Mammary epithelial cell (primary cell): ENCODE measurements at regions of chr7 and their contacts with region 1.

Region 1: GRCh38 chr7:102396027-102397019 is at the start of gene PRKRIP1:
- DNase-seq: peak; percentile 89
- H3K4me3 ChIP-seq: peak within 1 kb of the TSS; percentile 76 to 97 (median 94)
- H3K27ac ChIP-seq: peak within 1 kb of the TSS; percentile 88
- H3K4me1 ChIP-seq: peaks cover 6% of the 10 kb centered on the region
- H3K27me3 ChIP-seq: no peaks in the 10 kb centered on the region
- CTCF ChIP-seq: no peak
- total RNA-seq, gene PRKRIP1: 13.3 to 27.1 TPM

Region 2: GRCh38 chr7:100827330-100828227 is 1568.7 kb before region 1 on chr7 and contains the start of gene EPHB4:
- CTCF ChIA-PET with region 1: no interaction called
- dilution Hi-C with region 1: no loop called
- in situ Hi-C with region 1: no loop called
- intact Hi-C with region 1: no loop called
- DNase-seq: peak; percentile 79
- H3K4me3 ChIP-seq: peak within 1 kb of the TSS; percentile 70 to 86 (median 72)
- H3K27ac ChIP-seq: peak within 1 kb of the TSS; percentile 39
- H3K4me1 ChIP-seq: peaks cover 7% of the 10 kb centered on the region
- H3K27me3 ChIP-seq: no peaks in the 10 kb centered on the region
- CTCF ChIP-seq: no peak
- total RNA-seq, gene EPHB4: 75.0 to 81.0 TPM

Region 3: GRCh38 chr7:102286237-102287110 is 109.8 kb before region 1 on chr7 and contains the start of gene SH2B2:
- CTCF ChIA-PET with region 1: no interaction called
- dilution Hi-C with region 1: loop called (anchors 5 kb)
- in situ Hi-C with region 1: loop called (anchors 5 kb)
- intact Hi-C with region 1: no loop called
- DNase-seq: peak; percentile 32
- H3K4me3 ChIP-seq: peak within 1 kb of the TSS; percentile 72 to 83 (median 80)
- H3K27ac ChIP-seq: no peak within 1 kb of the TSS
- H3K4me1 ChIP-seq: peaks cover 12% of the 10 kb centered on the region
- H3K27me3 ChIP-seq: no peaks in the 10 kb centered on the region
- CTCF ChIP-seq: no peak
- total RNA-seq, gene SH2B2: 3.0 to 3.4 TPM

Region 4: DNA sequence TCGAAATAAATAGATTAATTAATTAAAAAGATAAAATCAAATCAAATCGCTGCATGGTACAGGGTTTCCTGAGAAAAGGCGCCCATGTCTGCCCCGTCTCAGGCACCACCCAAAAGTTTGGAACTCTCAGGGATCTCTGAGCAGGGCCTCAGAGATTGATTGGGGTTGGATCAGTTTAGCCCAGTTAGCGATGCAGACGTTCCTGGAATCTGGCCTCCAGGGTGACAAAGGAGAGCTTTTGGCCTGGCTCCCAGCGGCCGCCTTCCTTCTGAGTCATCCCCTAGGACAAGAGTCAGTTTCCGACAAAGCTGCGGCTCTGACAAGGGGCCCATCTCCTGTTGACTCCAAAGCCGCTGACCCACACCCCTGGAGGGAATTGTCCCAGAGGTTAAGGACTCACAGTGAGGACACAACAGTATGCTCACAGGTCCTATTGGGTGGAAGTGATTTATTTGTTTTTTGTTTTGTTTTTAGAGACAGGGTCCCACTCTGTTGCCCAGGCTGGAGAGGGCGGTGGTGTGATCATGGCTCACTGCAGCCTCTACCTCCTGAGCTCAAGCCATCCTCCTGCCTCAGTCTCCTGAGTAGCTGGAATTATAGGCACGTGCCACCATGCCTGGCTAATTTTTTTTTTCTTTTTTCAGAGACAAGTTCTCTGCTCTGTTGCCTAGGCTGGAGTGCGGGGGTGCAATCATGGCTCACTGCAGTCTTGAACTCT is 43.9 kb after region 1 on chr7:
- CTCF ChIA-PET with region 1: no interaction called
- dilution Hi-C with region 1: loop called (anchors 5 kb)
- in situ Hi-C with region 1: no loop called
- intact Hi-C with region 1: no loop called
- DNase-seq: peak; percentile 56
- H3K4me3 ChIP-seq: no peak overlapping the region
- H3K27ac ChIP-seq: no peak overlapping the region
- H3K4me1 ChIP-seq: peaks cover 11% of the 10 kb centered on the region
- H3K27me3 ChIP-seq: no peaks in the 10 kb centered on the region
- CTCF ChIP-seq: no peak

Region 5: DNA sequence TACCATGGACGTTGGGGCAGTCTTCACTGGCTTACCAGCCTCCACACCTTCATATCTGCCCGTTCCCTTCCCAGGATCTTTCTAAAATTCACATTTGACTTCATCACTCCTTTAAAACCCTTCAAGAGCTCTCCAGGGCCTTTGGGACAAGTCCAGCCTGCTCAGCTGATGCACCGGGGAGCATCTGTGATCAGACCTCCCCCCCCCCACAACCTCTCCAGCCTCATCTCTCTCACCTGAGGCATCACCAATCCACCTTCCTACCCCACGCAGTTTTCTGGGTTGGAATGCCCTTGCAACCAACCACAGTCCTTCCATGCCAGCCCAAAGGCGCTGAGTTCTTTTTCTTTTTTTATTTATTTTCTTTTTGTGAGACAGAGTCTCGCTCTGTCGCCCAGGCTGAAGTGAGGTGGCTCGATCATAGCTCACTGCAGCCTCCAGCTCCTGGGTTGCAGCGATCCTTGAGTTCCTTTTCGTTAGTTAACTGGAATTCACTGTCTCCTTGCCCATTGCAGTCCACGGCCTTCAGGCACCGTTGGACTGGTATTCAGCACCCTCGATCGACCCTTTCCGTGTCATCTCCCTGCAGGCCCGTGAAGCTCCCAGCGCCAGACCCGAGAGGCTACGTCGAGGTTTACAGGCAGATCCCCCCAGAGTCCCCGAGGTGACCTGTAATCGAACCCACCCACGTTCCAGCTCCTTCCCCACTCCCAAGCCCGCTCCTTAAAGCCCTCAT is 67.7 kb after region 1 on chr7:
- CTCF ChIA-PET with region 1: no interaction called
- dilution Hi-C with region 1: no loop called
- in situ Hi-C with region 1: no loop called
- intact Hi-C with region 1: no loop called
- DNase-seq: no peak
- H3K4me3 ChIP-seq: peak overlapping the region; percentile 82 to 97 (median 93)
- H3K27ac ChIP-seq: peak overlapping the region; percentile 26
- H3K4me1 ChIP-seq: peaks cover 12% of the 10 kb centered on the region
- H3K27me3 ChIP-seq: no peaks in the 10 kb centered on the region
- CTCF ChIP-seq: no peak

Region 6: GRCh38 chr7:102834999-102835398 is 438.7 kb after region 1 on chr7:
- CTCF ChIA-PET with region 1: no interaction called
- dilution Hi-C with region 1: no loop called
- in situ Hi-C with region 1: no loop called
- intact Hi-C with region 1: no loop called
- DNase-seq: peak; percentile 85
- H3K4me3 ChIP-seq: no peak overlapping the region
- H3K27ac ChIP-seq: no peak overlapping the region
- H3K4me1 ChIP-seq: peaks cover 24% of the 10 kb centered on the region
- H3K27me3 ChIP-seq: no peaks in the 10 kb centered on the region
- CTCF ChIP-seq: no peak